Posterior vena cava (tissue), 2 donors: ENCODE measurements at regions of chr15 and their contacts with region 1.

Region 1: DNA sequence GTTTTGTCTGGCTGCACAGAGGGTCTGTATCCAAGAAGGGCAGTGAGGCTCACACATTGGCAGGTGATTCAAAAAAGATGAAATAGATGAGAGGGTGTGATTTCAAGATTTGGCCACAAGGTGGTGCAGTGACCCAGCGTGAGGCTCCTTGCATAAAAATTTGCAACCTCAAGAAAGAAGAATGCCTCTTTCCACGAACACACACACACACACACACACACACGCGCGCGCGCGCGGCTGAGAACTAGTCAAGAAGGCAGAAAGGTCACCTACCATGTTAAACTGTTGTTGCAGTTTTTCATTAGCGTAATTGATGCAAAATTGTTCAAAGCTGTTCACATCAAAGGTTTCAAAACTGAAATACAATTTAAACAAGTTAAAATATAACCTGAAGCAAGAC is 39.2 kb downstream of the MYO5C start:
- DNase-seq: no peak

Region 2: DNA sequence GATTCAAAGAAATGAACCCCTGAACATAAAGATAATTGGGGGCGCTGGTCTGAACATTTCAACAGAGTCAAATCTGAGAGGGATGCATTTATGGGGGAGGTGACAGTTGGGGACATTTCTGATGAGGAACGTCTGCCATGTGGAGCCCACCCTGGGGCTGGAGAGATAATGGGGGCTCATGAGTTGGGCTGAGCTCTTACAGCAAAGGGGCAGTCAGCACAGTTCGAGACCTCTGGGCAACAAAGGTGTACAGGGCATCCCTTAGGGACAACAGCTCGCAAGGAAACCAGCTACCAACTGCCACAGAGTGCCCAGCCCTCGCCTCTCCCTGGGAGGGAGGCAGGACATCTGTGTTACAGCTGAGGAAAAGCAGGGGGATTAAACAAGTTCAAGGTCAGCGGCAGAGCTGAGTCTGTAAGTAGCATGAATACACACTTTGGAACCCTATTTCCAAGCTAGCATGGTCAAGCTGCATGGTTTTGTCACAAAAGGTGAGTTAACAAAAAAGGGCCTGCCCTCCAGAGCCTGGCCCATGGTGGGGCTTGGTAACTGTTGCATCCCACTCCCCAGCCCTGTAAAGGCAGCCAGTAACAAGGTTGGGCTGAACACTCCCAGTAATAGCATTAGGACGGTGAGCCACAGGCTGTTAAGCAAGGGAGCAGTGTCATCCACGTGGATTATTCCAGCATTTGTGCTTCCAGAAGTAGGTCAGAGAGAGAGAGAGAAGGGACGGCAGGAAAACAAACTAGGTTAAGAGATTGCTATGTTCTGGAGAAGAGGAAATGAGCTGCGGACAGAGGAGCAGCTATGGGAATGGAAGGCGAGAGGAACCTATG is 69.5 kb before region 1 on chr15:
- intact Hi-C with region 1: no loop called
- DNase-seq: no peak

Region 3: GRCh38 chr15:52349052-52349700 is 92.8 kb after region 1 on chr15:
- intact Hi-C with region 1: loop called in 1 of 2 experiments (anchors 10 kb)
- DNase-seq: no peak

Region 4: DNA sequence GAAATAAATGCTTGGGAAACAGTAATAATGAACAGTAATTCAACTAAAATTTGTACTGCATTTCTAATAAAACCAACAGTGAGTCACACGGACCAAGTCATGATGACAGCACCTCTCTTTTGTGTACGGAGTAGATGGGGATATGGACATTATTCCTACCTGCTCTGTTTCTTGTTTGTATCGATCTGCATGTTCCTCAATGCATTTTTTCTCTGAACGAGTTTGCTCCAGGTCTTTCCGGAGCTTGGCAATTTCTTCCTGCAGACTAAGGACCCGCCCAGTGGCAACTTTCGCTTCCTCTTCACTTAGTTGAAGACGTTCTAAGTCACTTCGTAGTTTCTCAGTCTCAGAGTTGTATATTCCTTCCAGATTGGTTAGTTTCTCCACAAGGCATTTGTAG is 113.6 kb after region 1 on chr15:
- intact Hi-C with region 1: no loop called
- DNase-seq: no peak

Region 5: GRCh38 chr15:52427804-52428203 is 171.4 kb after region 1 on chr15:
- intact Hi-C with region 1: no loop called
- DNase-seq: peak; percentile 85

Region 6: GRCh38 chr15:52730173-52730572 is 473.8 kb after region 1 on chr15:
- intact Hi-C with region 1: loop called (anchors 2 to 5 kb)
- DNase-seq: no peak